ENCODE measurements at regions of chr1 and their contacts with region 1.

Region 1: DNA sequence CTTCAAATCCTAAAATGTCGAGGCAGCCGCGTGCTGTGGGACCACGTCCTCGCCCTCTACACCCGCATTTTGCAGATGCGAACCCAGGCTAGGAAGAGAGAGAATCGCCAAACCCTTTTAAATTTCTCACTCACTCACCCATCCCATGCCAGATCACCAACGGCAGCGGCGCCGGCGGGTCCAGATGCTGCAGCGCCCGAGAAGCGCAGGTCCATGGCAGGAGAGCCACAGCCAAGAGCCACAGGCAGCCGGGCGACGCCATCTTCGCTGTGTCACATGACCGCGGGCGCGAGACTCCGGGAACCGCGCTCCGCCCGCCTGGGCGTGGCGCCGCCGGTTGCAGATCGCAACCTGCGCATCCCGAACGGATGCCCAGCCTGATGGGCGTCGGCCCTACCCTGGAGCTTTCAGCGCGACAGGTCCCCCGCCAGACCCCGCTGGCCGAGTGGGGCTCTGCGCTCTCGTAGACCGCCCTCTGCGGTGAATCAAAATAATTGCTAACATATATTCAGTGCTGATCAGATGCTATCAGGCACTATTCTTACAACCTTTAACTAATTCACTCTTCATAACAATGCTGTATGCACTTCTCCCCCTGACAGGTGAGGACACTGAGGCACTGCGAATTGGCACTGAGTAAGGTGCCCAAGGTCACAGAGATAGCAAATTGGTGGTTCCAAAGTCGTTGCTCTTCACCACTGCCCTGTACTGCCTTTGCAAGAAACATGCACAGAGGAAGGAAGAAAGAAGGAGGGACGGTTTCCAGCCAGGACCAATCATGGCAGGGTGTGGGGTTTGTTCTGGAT is at the start of gene PPT1:
- DNase-seq: peak; percentile 87
- ATAC-seq: peak; percentile 95
- H3K4me3 Mint-ChIP-seq: peak within 1 kb of the TSS; percentile 84
- H3K27ac Mint-ChIP-seq: peak within 1 kb of the TSS; percentile 89
- H3K4me1 Mint-ChIP-seq: peaks cover 38% of the 10 kb centered on the region
- H3K27me3 Mint-ChIP-seq: peaks cover 7% of the 10 kb centered on the region
- total RNA-seq, gene PPT1: 74.1 to 96.6 TPM

Region 2: DNA sequence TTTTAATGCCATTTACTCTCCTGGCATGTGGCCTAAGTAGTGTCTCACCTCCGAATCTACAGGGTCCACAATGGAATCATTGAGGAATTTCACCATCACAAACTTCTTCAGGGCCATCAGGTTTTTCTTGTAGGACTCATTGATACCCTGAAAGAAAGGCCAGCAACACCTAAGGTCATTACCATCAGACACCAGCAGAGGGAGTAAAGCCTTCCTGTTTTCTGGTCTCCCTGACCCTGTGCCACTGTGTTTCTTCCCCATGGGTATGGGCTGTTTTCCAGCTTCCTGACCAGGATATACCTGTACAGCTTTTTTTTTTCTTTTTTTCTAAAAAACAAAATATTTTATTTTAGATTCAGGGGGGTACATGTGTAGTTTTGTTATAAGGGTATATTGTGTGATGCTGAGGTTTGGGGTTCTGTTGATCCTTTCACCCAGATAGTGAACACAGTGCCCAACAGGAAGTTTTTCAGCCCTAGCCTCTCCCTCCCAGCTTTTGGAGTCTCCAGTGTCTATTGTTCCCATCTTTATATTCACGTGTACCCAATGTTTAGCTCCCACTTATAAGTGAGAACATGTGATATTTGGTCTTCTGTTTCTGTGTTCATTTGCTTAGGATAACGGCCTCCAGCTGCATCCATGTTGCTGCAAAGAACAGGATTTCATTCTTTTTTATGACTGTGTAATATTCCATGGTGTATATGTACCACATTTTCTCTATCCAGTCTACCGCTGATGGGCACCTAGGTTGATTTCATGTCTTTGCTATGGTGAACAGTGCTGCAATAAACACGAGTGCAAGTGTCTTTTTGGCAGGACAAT is 18.5 kb before region 1 on chr1:
- CTCF ChIA-PET with region 1: interaction called, 10 read pairs
- DNase-seq: peak; percentile 68
- ATAC-seq: peak; percentile 68
- H3K4me3 Mint-ChIP-seq: no peak overlapping the region
- H3K27ac Mint-ChIP-seq: no peak overlapping the region
- H3K4me1 Mint-ChIP-seq: peaks cover 19% of the 10 kb centered on the region
- H3K27me3 Mint-ChIP-seq: no peaks in the 10 kb centered on the region

Region 3: GRCh38 chr1:40107290-40108262 is 10.4 kb after region 1 on chr1:
- CTCF ChIA-PET with region 1: no interaction called
- DNase-seq: no peak
- ATAC-seq: no peak
- H3K4me3 Mint-ChIP-seq: no peak overlapping the region
- H3K27ac Mint-ChIP-seq: no peak overlapping the region
- H3K4me1 Mint-ChIP-seq: peaks cover 2% of the 10 kb centered on the region
- H3K27me3 Mint-ChIP-seq: peaks cover 19% of the 10 kb centered on the region